HEK293 (cell line): ENCODE measurements at regions of chr14 and their contacts with region 1.

Region 1: DNA sequence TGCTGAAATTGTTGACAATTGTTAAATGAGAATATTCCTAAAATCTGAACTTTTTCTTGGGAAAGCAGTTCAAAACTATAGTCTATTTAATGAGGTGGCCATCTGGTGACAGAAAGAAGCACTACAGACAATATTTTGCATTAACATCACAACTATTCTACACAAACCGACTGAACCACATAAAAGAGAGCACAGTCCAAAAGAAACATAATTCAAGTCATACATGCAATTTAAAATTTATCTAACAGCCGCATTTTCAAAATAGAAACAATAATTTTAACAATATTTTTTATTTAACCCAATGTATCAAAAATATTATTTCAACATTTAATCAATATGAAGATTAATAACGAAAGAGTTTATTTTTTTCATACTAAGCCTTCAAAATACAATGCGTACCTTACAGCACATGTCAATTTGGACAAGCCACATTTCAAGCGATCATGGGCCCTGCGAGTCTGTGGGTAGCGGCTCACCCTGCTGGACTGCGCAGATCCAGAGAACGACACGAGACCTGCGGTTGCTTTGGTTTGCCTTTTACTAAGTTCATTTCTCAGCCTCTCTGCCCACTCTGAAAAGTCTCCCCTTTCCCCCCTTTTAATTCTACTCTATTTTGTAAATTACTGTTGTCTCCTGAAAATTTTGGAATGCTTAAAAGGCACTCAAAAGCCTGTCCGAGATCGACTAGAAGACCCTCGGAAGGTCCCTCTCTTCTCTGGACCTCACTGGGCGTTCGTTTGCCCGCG is 947 bp upstream of the LRRC9 start:
- H3K4me3 ChIP-seq: peak overlapping the region; percentile 67
- H3K27ac ChIP-seq: peak overlapping the region; percentile 74; the same call in 1 of the 2 replicates
- H3K4me1 ChIP-seq: peaks cover 3% of the 10 kb centered on the region; the same call in 1 of the 2 replicates
- CTCF ChIP-seq: no peak

Region 2: GRCh38 chr14:59632381-59632780 is 286.6 kb before region 1 on chr14:
- CTCF ChIA-PET with region 1: interaction called, 14 read pairs
- POLR2A ChIA-PET with region 1: no interaction called
- H3K4me3 ChIP-seq: no peak overlapping the region
- H3K27ac ChIP-seq: no peak overlapping the region
- H3K4me1 ChIP-seq: peaks cover 11% of the 10 kb centered on the region
- CTCF ChIP-seq: no peak